ENCODE measurements at regions of chr9 and their contacts with region 1.

Region 1: DNA sequence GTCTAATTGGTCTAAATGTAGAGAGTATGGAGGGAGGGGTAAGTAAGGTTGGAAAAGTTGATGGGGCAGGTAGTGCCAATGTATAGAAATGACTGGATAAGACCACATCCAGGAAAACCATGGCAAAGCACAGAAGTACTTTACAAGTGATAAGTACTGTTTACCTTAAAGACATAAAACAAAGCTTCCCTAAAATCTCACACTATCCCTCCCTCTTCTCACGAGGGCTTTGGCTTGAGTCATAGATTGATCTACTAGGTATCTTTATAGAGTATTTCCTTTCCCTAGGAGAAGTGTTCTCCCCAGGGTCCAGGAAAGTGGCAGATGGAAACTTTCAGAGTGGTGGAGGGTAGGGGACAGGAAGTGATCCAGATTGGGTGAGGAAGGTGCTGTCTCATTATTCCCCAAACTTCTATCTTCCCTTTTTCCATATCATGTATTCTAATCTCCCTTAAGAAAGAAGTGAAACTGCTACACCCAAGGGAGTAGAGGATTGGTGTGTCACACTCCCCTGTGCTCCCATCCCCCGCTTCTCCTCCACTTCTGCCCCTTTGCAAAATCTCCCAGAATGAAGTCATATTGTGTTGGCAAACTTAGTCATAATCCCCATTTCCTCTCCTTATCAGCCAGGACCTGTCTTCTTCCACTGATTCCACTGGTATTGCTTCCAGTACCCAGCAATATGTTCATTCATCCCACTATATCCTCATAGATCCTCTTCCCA is 14.6 kb downstream of the IL33 start:
- DNase-seq: peak; percentile 82
- H3K4me3 ChIP-seq: no peak overlapping the region
- H3K27ac ChIP-seq: peak overlapping the region; percentile 31
- H3K4me1 ChIP-seq: peaks cover 33% of the 10 kb centered on the region
- H3K27me3 ChIP-seq: no peaks in the 10 kb centered on the region
- CTCF ChIP-seq: no peak
- POLR2A ChIP-seq: no peak

Region 2: GRCh38 chr9:5596173-5596572 is 634.0 kb before region 1 on chr9:
- CTCF ChIA-PET with region 1: no interaction called
- POLR2A ChIA-PET with region 1: no interaction called
- dilution Hi-C with region 1: no loop called
- intact Hi-C with region 1: no loop called
- DNase-seq: peak; percentile 28
- H3K4me3 ChIP-seq: no peak overlapping the region
- H3K27ac ChIP-seq: no peak overlapping the region
- H3K4me1 ChIP-seq: no peaks in the 10 kb centered on the region
- H3K27me3 ChIP-seq: no peaks in the 10 kb centered on the region
- CTCF ChIP-seq: no peak
- POLR2A ChIP-seq: no peak

Region 3: GRCh38 chr9:6096821-6097220 is 133.4 kb before region 1 on chr9:
- CTCF ChIA-PET with region 1: no interaction called
- POLR2A ChIA-PET with region 1: no interaction called
- dilution Hi-C with region 1: no loop called
- intact Hi-C with region 1: no loop called
- DNase-seq: peak; percentile 26
- H3K4me3 ChIP-seq: no peak overlapping the region
- H3K27ac ChIP-seq: no peak overlapping the region
- H3K4me1 ChIP-seq: peaks cover 15% of the 10 kb centered on the region
- H3K27me3 ChIP-seq: no peaks in the 10 kb centered on the region
- CTCF ChIP-seq: no peak
- POLR2A ChIP-seq: no peak

Region 4: GRCh38 chr9:6215562-6215961 is 14.6 kb before region 1 on chr9 and contains the start of gene IL33:
- CTCF ChIA-PET with region 1: interaction called, 10 read pairs
- POLR2A ChIA-PET with region 1: no interaction called
- dilution Hi-C with region 1: no loop called
- intact Hi-C with region 1: loop called (anchors 1 kb)
- DNase-seq: peak; percentile 72
- H3K4me3 ChIP-seq: peak within 1 kb of the TSS in 1 of 3 experiments; percentile 42
- H3K27ac ChIP-seq: no peak within 1 kb of the TSS
- H3K4me1 ChIP-seq: peaks cover 32% of the 10 kb centered on the region
- H3K27me3 ChIP-seq: no peaks in the 10 kb centered on the region
- CTCF ChIP-seq: no peak
- POLR2A ChIP-seq: no peak
- total RNA-seq, gene IL33: 8.5 and 13.8 TPM in 2 replicates

Region 5: DNA sequence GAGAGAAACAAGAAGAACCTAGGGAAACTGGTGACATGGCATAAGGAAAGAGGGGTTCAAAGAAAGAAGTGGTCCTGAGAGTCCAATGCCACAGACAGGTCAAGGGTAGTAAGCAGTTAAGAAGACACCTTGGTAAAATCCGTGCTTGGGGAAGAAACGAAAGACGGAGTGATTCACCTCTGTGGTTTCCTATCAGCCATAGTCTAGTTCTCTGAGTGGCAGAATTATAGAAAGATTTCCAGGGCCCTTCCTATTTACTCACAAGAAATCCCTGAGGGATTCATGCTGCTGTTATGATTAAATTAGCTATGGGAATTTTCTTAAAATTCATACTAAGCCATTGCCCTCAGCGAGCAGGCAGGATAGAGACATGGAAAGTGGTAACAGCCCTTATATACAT is 17.1 kb after region 1 on chr9:
- CTCF ChIA-PET with region 1: interaction called, 3 read pairs
- POLR2A ChIA-PET with region 1: no interaction called
- dilution Hi-C with region 1: no loop called
- intact Hi-C with region 1: loop called (anchors 2 kb)
- DNase-seq: peak; percentile 36
- H3K4me3 ChIP-seq: no peak overlapping the region
- H3K27ac ChIP-seq: no peak overlapping the region
- H3K4me1 ChIP-seq: peaks cover 8% of the 10 kb centered on the region
- H3K27me3 ChIP-seq: no peaks in the 10 kb centered on the region
- CTCF ChIP-seq: no peak
- POLR2A ChIP-seq: no peak

Region 6: DNA sequence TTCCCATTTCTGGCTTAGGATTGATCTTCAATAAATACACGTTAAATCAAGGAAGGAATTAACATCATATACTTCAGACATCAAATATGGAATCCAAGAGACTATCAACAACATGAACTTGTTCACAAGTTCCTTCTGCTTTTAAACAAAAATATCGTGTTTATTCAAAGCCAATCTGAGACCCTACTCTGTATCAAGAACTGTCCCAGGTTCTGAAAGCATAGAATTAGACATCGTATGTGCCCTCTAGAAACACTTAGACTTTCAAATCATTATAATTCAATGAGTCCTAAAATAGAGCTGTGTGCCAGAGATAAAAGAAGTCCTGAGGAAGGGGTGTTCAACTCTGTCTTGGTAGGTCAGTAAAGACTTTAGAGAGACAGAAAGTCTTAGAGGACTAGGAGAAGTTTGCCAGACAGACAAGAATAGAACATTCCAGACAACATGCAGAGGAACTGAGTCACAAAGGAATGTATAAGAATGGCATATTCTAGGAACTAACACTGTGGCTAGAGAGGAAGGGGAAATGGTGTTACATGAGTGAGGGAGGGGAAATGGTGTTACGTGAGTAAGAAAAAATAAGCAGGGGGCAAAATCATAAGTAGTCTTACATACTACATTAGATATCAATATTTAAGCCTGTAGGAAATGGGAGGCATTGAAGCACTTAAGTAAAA is 100.9 kb after region 1 on chr9:
- CTCF ChIA-PET with region 1: no interaction called
- POLR2A ChIA-PET with region 1: no interaction called
- dilution Hi-C with region 1: no loop called
- intact Hi-C with region 1: loop called (anchors 1 kb)
- DNase-seq: peak; percentile 88
- H3K4me3 ChIP-seq: no peak overlapping the region
- H3K27ac ChIP-seq: peak overlapping the region; percentile 69
- H3K4me1 ChIP-seq: peaks cover 19% of the 10 kb centered on the region
- H3K27me3 ChIP-seq: no peaks in the 10 kb centered on the region
- CTCF ChIP-seq: no peak
- POLR2A ChIP-seq: no peak